ENCODE measurements at regions of chrX and their contacts with region 1.

Region 1: DNA sequence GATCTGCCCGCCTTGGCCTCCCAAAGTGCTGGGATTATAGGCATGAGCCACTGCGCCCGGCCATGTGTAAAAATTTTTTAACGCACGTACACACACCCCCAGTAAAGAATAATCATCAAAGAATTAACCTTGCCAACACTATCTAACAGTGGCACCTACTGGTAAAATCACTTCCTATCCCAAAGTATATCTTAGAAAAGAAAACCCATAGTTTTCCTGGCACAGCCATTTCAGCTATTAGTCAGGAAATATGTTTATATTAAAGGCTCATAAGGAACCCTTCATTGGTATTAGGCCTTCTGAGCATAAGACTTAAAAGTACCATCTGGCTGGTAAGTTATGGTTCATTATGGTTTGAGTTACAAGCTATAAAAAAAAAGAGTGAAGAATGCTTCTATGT is 14.1 kb downstream of the S100G start:
- DNase-seq: peak in 4 of 9 donors; percentile 1 to 32 (median 7)
- ATAC-seq: no peak
- H3K4me3 ChIP-seq: no peak overlapping the region
- H3K4me3 Mint-ChIP-seq: no peak overlapping the region
- H3K27ac ChIP-seq: no peak overlapping the region
- H3K27ac Mint-ChIP-seq: no peak overlapping the region
- H3K4me1 ChIP-seq: no peaks in the 10 kb centered on the region
- H3K4me1 Mint-ChIP-seq: peaks cover 0 to 8% (median 0%) of the 10 kb centered on the region in 7 donors
- H3K27me3 ChIP-seq: no peaks in the 10 kb centered on the region
- H3K27me3 Mint-ChIP-seq: no peaks in the 10 kb centered on the region

Region 2: GRCh38 chrX:16100673-16101072 is 563.4 kb before region 1 on chrX:
- CTCF ChIA-PET with region 1: no interaction called
- POLR2A ChIA-PET with region 1: no interaction called
- intact Hi-C with region 1: no loop called
- DNase-seq: no peak
- ATAC-seq: no peak
- H3K4me3 ChIP-seq: no peak overlapping the region
- H3K4me3 Mint-ChIP-seq: no peak overlapping the region
- H3K27ac ChIP-seq: no peak overlapping the region
- H3K27ac Mint-ChIP-seq: no peak overlapping the region
- H3K4me1 ChIP-seq: no peaks in the 10 kb centered on the region
- H3K4me1 Mint-ChIP-seq: peaks cover 0 to 2% (median 0%) of the 10 kb centered on the region in 7 donors
- H3K27me3 ChIP-seq: no peaks in the 10 kb centered on the region
- H3K27me3 Mint-ChIP-seq: peaks cover 0 to 8% (median 1%) of the 10 kb centered on the region in 5 donors

Region 3: GRCh38 chrX:16436348-16437188 is 227.5 kb before region 1 on chrX:
- CTCF ChIA-PET with region 1: interaction called, 11 read pairs
- POLR2A ChIA-PET with region 1: no interaction called
- intact Hi-C with region 1: loop called in 1 of 2 experiments (anchors 1 kb)
- DNase-seq: peak; percentile 19 to 55 (median 44)
- ATAC-seq: peak; percentile 78
- H3K4me3 ChIP-seq: no peak overlapping the region
- H3K4me3 Mint-ChIP-seq: peak overlapping the region in 1 of 10 donors; percentile 44
- H3K27ac ChIP-seq: no peak overlapping the region
- H3K27ac Mint-ChIP-seq: peak overlapping the region in 1 of 9 donors; percentile 0
- H3K4me1 ChIP-seq: peaks cover 0 to 15% of the 10 kb centered on the region in 2 donors
- H3K4me1 Mint-ChIP-seq: peaks cover 3 to 19% (median 15%) of the 10 kb centered on the region in 7 donors
- H3K27me3 ChIP-seq: no peaks in the 10 kb centered on the region
- H3K27me3 Mint-ChIP-seq: no peaks in the 10 kb centered on the region

Measured in naive thymus-derived CD4-positive, alpha-beta T cell (primary cell).